Transverse colon (tissue), 4 donors: ENCODE measurements at regions of chr3 and their contacts with region 1.

Region 1: GRCh38 chr3:2484162-2485026 is 385.7 kb downstream of the CNTN4 start:
- DNase-seq: no peak
- H3K4me3 ChIP-seq: no peak overlapping the region
- H3K27ac ChIP-seq: no peak overlapping the region
- H3K4me1 ChIP-seq: no peaks in the 10 kb centered on the region
- H3K27me3 ChIP-seq: no peaks in the 10 kb centered on the region
- CTCF ChIP-seq: no peak
- EP300 ChIP-seq: no peak
- POLR2A ChIP-seq: no peak

Region 2: GRCh38 chr3:492586-493296 is 1991.7 kb before region 1 on chr3:
- in situ Hi-C with region 1: no loop called
- intact Hi-C with region 1: loop called (anchors 5 kb)
- DNase-seq: no peak
- H3K4me3 ChIP-seq: no peak overlapping the region
- H3K27ac ChIP-seq: no peak overlapping the region
- H3K4me1 ChIP-seq: no peaks in the 10 kb centered on the region
- H3K27me3 ChIP-seq: no peaks in the 10 kb centered on the region
- CTCF ChIP-seq: no peak
- EP300 ChIP-seq: no peak
- POLR2A ChIP-seq: no peak